Adrenal gland (tissue), 19 donors: ENCODE measurements at regions of chr11 and their contacts with region 1.

Region 1: DNA sequence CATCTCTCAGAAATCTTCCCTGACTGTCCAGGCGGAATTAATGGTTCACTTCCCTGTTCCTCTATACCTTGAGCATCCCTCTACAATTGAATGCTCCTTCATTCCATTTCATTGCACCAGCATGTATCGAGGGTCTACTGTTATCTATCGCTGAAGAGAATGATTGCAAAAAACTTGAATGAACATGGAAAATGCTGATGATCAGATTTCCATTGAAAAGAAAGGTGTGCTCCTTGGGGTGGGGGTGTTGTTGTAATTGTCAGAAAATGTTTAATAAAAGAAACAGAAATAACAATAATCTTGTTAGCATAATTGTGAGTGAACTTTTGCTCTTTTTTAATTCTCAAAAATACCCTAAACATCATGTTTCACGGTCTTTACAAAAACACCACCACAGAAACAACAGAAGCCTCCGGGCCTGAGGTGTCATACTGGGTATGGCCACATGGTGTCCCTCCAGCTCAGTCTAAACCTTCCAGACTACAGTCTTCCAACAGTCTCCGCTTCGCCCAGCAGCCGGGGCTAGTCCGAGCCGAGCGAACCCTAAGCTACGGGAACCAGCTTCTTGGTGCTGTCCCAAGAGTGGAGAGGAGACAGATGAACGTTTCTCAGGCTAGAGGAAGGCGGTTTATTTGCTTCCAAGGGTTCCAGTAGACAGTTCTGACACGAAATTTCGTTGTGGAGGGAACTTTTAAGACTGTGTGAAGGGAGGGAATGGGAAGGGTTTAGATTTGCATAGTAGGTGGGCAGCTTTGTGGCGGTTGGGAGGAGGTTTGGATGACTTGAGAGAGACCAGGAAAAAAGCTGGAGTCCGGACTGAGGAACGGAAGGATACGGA is 75.8 kb upstream of the ZBED5 start:
- DNase-seq: peak; percentile 88 to 97 (median 95)
- H3K4me3 ChIP-seq: peak overlapping the region in 2 of 4 donors; percentile 16 to 50
- H3K27ac ChIP-seq: peak overlapping the region in 2 of 5 donors; percentile 33 to 43
- H3K4me1 ChIP-seq: no peaks in the 10 kb centered on the region
- H3K27me3 ChIP-seq: no peaks in the 10 kb centered on the region
- CTCF ChIP-seq: peak; percentile 94 to 99 (median 98)
- POLR2A ChIP-seq: no peak

Region 2: GRCh38 chr11:10808553-10809372 is 124.9 kb before region 1 on chr11 and contains the start of gene EIF4G2:
- intact Hi-C with region 1: loop called in 1 of 2 experiments (anchors 10 kb)
- DNase-seq: peak; percentile 98 to 99 (median 99)
- H3K4me3 ChIP-seq: peak within 1 kb of the TSS; percentile 86 to 96 (median 88)
- H3K27ac ChIP-seq: peak within 1 kb of the TSS; percentile 88 to 99 (median 97)
- H3K4me1 ChIP-seq: peaks cover 8 to 38% of the 10 kb centered on the region in 2 donors
- H3K27me3 ChIP-seq: no peaks in the 10 kb centered on the region
- CTCF ChIP-seq: peak in 1 of 6 experiments; percentile 10
- POLR2A ChIP-seq: peak; percentile 99 to 100
- total RNA-seq, gene EIF4G2: 392 to 1,049 (median 549) TPM

Region 3: GRCh38 chr11:11022125-11022730 is 88.6 kb after region 1 on chr11:
- intact Hi-C with region 1: loop called (anchors 5 kb)
- DNase-seq: peak in 1 of 7 donors; percentile 31
- H3K4me3 ChIP-seq: no peak overlapping the region
- H3K27ac ChIP-seq: no peak overlapping the region
- H3K4me1 ChIP-seq: no peaks in the 10 kb centered on the region
- H3K27me3 ChIP-seq: no peaks in the 10 kb centered on the region
- CTCF ChIP-seq: peak; percentile 29 to 57 (median 50)
- POLR2A ChIP-seq: no peak

Region 4: DNA sequence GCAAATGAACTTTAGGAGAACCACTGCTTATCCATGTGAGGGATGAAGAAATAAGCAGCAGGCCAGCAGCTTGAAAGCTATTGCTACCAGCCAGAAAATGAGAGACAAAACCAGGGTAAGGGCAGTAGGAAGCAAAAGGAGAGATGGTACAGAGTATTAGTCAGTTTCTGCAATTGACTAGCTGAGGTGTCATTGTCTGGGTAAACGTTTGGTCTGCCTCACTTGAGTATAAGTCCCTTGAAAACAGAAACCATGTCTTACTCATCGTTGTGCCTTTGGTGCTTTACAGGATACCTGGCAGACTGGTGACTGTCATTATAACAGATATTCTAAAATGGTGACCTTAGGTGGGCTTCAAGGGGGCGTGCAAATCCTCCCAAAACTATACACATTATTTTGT is 844.2 kb after region 1 on chr11:
- intact Hi-C with region 1: loop called in 1 of 2 experiments (anchors 10 kb)
- DNase-seq: no peak
- H3K4me3 ChIP-seq: no peak overlapping the region
- H3K27ac ChIP-seq: no peak overlapping the region
- H3K4me1 ChIP-seq: no peaks in the 10 kb centered on the region
- H3K27me3 ChIP-seq: no peaks in the 10 kb centered on the region
- CTCF ChIP-seq: no peak
- POLR2A ChIP-seq: no peak

Region 5: DNA sequence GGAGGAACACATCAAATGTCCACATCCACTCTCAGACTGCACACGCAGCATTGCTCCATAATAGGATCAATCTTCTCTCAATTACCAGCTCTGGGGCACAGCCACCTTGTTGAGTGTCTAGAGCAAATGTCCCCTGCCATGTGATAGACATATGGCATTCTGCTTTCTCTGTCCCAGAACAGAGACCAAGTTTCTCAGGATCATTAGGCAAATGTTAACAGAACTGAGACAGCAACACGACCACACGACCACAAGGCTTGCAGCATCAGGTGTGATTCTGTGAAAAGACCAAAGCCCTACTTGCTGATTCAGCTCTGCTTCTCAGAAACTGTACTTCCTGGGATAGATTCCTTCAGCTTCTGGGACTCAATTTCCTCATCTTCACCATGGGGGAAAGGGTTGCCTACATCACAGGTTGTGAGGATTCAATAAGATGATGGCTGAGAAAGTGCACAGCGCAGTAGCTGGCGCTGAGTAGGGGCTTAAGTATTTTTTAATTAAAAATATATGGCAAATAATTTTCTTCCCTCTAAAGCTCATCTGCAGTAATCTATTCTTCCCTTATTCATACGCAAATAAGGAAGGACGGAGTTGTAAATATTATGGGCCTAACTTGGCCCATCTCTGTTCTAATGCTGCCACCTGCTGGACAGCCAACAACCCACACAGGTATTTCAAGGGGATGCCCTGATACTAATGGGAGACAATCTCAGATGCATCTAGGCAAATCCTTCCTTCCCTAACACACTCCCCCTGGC is 853.8 kb after region 1 on chr11:
- intact Hi-C with region 1: loop called in 1 of 2 experiments (anchors 5 kb)
- DNase-seq: peak; percentile 55 to 90 (median 76)
- H3K4me3 ChIP-seq: no peak overlapping the region
- H3K27ac ChIP-seq: no peak overlapping the region
- H3K4me1 ChIP-seq: no peaks in the 10 kb centered on the region
- H3K27me3 ChIP-seq: no peaks in the 10 kb centered on the region
- CTCF ChIP-seq: peak; percentile 76 to 92 (median 88)
- POLR2A ChIP-seq: no peak